ENCODE measurements at regions of chrX and their contacts with region 1.

Region 1: GRCh38 chrX:70096052-70096451 is 33.8 kb downstream of the OTUD6A start:
- DNase-seq: peak; percentile 21
- ATAC-seq: peak; percentile 56; the same call in 1 of the 2 replicates
- H3K4me3 Mint-ChIP-seq: no peak overlapping the region
- H3K27ac Mint-ChIP-seq: no peak overlapping the region
- H3K4me1 Mint-ChIP-seq: no peaks in the 10 kb centered on the region
- H3K27me3 Mint-ChIP-seq: no peaks in the 10 kb centered on the region
- CTCF ChIP-seq: no peak

Region 2: DNA sequence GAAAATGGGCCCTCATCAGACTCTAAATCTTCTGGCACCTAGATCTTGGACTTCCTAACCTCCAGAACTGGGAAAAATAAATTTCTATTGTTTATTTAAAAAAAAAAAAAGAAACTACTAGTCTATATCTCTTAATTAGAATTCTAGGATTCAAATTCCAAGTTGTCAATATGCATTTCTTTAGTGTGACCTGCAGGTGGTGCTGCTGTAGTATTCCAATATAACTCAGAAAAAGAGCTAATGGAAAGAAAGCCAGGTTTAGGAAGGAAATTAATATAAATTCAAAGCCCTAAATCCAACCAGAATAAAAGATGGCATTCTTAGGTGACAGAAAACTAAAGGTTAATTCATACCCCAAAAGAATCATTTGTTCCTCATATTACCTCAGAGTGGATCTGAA is 671.9 kb before region 1 on chrX:
- CTCF ChIA-PET with region 1: interaction called, 10 read pairs
- POLR2A ChIA-PET with region 1: no interaction called
- DNase-seq: no peak
- ATAC-seq: no peak
- H3K4me3 Mint-ChIP-seq: no peak overlapping the region
- H3K27ac Mint-ChIP-seq: no peak overlapping the region
- H3K4me1 Mint-ChIP-seq: 0 out of 2 replicates have a peak, but pooled peaks cover 5% of the 10 kb centered on the region
- H3K27me3 Mint-ChIP-seq: no peaks in the 10 kb centered on the region; the same call in 1 of the 2 replicates
- CTCF ChIP-seq: no peak

Region 3: DNA sequence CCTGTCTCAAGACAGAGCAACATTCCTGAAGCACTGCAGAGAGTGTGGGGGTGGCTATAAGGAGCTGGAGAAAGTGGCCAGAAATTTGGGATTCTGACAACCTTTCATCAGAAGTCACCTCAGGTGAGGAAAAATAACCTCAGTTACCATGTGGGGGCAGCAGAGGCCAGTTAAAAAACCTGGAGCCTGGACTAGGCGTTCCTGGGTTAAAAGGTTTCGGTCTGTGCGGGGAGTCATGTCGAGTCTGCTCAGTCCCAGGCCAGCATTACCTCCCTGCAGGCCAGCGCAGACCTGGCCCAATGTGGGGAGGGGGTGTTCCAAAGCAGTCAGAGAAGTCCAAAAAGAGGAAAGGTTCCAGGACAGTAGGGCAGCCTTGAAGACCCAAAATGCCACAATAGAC is 602.9 kb before region 1 on chrX:
- CTCF ChIA-PET with region 1: interaction called, 11 read pairs
- POLR2A ChIA-PET with region 1: no interaction called
- DNase-seq: peak; percentile 64
- ATAC-seq: peak; percentile 97
- H3K4me3 Mint-ChIP-seq: no peak overlapping the region
- H3K27ac Mint-ChIP-seq: no peak overlapping the region
- H3K4me1 Mint-ChIP-seq: no peaks in the 10 kb centered on the region
- H3K27me3 Mint-ChIP-seq: peaks cover 13% of the 10 kb centered on the region
- CTCF ChIP-seq: peak; percentile 48

Region 4: DNA sequence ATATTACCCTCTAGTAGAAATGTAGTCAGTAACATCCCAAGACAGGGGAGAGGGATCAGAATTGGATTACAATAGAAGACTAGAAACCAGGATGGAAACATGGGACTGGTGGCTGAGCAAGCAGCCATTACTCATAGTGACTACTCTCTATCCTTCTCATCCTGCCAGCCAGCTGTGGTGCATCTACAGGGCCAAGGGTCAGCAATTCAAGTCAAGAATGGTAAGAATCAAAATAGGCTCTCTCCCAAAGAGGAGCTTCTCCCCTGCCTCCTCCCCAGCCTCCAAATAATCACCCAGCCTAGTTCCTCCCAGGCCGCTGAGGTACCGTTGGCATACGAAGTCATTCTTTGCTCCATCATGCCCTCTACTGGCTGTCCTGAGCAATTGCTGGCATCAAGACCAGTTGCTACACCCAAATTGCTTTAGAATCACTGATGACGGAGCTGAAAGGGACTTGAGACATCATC is 65.7 kb before region 1 on chrX:
- CTCF ChIA-PET with region 1: interaction called, 61 read pairs
- POLR2A ChIA-PET with region 1: no interaction called
- DNase-seq: peak; percentile 49
- ATAC-seq: peak; percentile 54; the same call in 1 of the 2 replicates
- H3K4me3 Mint-ChIP-seq: no peak overlapping the region
- H3K27ac Mint-ChIP-seq: no peak overlapping the region
- H3K4me1 Mint-ChIP-seq: peaks cover 23% of the 10 kb centered on the region
- H3K27me3 Mint-ChIP-seq: no peaks in the 10 kb centered on the region; the same call in 1 of the 2 replicates
- CTCF ChIP-seq: peak; percentile 63

Region 5: DNA sequence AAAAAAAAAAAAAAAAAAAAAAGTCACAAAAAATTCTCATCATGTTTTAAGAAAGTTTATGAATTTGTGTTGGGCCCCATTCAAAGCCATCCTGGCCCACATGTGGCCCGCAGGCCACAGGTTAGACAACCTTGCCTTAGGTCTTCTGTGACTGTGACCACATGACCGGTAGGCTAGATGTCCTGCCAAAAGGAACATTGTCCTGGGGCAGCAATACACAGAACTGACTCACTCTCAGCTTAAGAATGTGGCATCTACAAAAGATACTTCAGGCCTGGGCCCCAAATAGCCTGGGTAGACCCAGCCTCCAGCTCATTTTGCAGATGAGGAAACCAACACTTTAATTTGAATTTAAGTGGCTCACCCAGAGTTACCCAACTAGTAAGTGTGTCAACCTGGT is 56.3 kb before region 1 on chrX:
- CTCF ChIA-PET with region 1: interaction called, 61 read pairs
- POLR2A ChIA-PET with region 1: no interaction called
- DNase-seq: no peak
- ATAC-seq: no peak
- H3K4me3 Mint-ChIP-seq: no peak overlapping the region
- H3K27ac Mint-ChIP-seq: no peak overlapping the region
- H3K4me1 Mint-ChIP-seq: 0 out of 2 replicates have a peak, but pooled peaks cover 2% of the 10 kb centered on the region
- H3K27me3 Mint-ChIP-seq: no peaks in the 10 kb centered on the region; the same call in 1 of the 2 replicates
- CTCF ChIP-seq: no peak

Region 6: GRCh38 chrX:70128071-70128470 is 32.0 kb after region 1 on chrX:
- CTCF ChIA-PET with region 1: interaction called, 10 read pairs
- POLR2A ChIA-PET with region 1: no interaction called
- DNase-seq: peak; percentile 19
- ATAC-seq: peak; percentile 59
- H3K4me3 Mint-ChIP-seq: 0 out of 2 replicates have a peak overlapping the region, but pooled peaks have one; percentile 23
- H3K27ac Mint-ChIP-seq: no peak overlapping the region
- H3K4me1 Mint-ChIP-seq: peaks cover 36% of the 10 kb centered on the region
- H3K27me3 Mint-ChIP-seq: no peaks in the 10 kb centered on the region
- CTCF ChIP-seq: no peak

Region 7: DNA sequence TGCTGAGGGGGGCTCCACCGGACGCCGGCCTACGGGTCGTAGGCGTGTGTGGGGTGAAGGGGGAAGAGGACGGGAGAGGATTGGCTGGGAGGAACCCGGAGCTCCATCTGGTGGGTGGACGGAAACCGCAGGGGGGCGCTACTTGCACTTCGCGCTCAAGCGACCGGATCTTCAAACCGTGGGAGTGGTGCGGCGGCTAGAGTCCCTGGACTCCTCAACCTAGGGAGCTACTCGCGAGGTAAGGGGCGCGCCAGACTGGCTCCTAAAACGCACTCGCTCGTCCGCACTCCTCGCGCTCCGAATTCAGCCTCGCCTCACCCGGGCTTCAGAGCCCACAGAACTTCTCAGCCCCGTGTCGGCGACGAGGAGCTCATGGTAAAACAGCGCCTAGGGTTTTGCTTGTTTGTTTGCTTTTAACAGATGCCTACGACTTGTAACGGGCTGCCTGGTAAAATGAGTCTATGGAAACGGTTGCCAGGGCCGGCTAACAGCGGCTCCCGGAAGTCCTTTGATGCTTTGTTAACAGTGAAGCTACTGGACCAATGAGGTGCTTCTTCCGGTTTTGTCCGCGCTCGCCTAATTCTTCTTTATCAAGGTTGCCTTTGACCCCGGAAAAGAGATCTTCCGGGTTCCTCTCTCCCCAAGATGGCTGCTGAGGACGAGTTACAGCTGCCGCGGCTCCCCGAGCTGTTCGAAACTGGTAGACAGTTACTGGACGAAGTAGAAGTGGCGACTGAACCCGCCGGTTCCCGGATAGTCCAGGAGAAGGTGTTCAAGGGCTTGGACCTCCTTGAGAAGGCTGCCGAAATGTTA is 37.5 kb after region 1 on chrX and contains the start of gene IGBP1:
- CTCF ChIA-PET with region 1: interaction called, 11 read pairs
- POLR2A ChIA-PET with region 1: no interaction called
- DNase-seq: peak; percentile 81
- ATAC-seq: peak; percentile 92
- H3K4me3 Mint-ChIP-seq: peak within 1 kb of the TSS; percentile 100
- H3K27ac Mint-ChIP-seq: peak within 1 kb of the TSS; percentile 97
- H3K4me1 Mint-ChIP-seq: peaks cover 36% of the 10 kb centered on the region
- H3K27me3 Mint-ChIP-seq: no peaks in the 10 kb centered on the region
- CTCF ChIP-seq: no peak
- total RNA-seq, gene IGBP1: 38.9 to 46.5 TPM (median 45.3 TPM) in 3 replicates

Measured in WTC11 (cell line).